ENCODE measurements at regions of chr16 and their contacts with region 1.

Region 1: DNA sequence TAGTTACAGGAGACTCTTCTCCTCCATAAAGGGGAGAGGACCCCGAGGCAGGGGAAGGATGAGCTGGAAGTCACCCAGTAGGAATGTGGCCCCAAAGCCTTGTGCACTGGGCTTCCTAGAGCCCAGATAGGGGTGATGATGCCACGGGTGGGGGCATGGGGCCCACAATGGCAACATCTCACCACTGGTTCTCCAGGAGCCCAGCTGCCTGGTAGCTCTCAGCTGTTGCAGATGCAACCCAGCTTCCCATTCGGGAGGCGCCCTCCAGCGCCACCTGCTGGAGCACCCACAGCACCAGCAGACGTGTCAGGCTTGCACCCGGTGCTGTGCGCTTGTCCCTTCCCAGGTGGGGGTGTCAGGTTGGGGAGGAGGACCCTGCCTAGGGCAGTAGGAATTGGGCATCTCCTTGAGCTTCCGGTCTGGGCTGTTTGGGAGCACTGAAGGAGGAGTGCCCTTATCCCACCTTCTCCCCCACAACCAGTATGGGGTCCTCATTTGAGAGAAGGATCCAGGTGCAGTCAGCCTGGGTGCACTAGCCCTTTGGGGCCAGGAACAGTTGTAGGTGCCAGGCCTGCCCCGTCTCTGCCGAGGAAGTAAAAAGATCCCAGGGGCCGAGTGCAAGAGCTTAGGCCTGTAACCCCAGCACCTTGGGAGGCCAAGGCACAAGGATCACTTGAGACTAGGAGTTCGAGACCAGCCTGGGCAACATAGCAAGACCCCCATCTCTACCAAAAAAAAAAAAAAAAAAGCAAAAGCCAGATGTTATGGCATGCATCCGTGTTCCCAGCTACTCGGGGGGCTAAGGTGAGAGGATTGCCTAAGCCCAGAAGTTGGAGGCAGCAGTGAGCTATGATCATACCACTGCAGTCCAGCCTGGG is 14.4 kb downstream of the CDIPT start:
- DNase-seq: peak; percentile 88
- H3K4me3 Mint-ChIP-seq: no peak overlapping the region
- H3K27ac Mint-ChIP-seq: no peak overlapping the region
- H3K4me1 Mint-ChIP-seq: peaks cover 6% of the 10 kb centered on the region
- H3K27me3 Mint-ChIP-seq: no peaks in the 10 kb centered on the region

Region 2: DNA sequence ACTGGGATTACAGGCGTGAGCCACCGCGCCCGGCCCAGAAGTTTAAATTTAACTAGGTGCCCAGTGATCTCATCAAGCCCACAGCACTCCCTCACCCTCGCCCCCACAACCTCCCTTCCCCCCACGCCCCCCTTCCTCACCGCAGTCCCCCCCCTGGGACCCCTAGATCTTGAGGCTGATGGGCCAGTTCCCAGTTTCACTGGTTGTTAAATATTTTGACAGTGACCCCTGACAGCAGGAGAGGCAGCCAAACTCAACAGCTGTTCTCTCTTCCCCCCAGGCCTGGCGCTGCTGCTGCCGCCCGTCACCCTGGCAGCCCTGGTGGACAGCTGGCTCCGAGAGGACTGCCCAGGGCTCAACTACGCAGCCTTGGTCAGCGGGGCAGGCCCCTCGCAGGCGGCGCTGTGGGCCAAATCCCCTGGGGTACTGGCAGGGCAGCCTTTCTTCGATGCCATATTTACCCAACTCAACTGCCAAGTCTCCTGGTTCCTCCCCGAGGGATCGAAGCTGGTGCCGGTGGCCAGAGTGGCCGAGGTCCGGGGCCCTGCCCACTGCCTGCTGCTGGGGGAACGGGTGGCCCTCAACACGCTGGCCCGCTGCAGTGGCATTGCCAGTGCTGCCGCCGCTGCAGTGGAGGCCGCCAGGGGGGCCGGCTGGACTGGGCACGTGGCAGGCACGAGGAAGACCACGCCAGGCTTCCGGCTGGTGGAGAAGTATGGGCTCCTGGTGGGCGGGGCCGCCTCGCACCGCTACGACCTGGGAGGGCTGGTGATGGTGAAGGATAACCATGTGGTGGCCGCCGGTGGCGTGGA is 154.1 kb before region 1 on chr16:
- CTCF ChIA-PET with region 1: interaction called, 97 read pairs
- POLR2A ChIA-PET with region 1: no interaction called
- intact Hi-C with region 1: no loop called
- DNase-seq: no peak
- H3K4me3 Mint-ChIP-seq: no peak overlapping the region
- H3K27ac Mint-ChIP-seq: no peak overlapping the region
- H3K4me1 Mint-ChIP-seq: peaks cover 4% of the 10 kb centered on the region
- H3K27me3 Mint-ChIP-seq: no peaks in the 10 kb centered on the region

Region 3: DNA sequence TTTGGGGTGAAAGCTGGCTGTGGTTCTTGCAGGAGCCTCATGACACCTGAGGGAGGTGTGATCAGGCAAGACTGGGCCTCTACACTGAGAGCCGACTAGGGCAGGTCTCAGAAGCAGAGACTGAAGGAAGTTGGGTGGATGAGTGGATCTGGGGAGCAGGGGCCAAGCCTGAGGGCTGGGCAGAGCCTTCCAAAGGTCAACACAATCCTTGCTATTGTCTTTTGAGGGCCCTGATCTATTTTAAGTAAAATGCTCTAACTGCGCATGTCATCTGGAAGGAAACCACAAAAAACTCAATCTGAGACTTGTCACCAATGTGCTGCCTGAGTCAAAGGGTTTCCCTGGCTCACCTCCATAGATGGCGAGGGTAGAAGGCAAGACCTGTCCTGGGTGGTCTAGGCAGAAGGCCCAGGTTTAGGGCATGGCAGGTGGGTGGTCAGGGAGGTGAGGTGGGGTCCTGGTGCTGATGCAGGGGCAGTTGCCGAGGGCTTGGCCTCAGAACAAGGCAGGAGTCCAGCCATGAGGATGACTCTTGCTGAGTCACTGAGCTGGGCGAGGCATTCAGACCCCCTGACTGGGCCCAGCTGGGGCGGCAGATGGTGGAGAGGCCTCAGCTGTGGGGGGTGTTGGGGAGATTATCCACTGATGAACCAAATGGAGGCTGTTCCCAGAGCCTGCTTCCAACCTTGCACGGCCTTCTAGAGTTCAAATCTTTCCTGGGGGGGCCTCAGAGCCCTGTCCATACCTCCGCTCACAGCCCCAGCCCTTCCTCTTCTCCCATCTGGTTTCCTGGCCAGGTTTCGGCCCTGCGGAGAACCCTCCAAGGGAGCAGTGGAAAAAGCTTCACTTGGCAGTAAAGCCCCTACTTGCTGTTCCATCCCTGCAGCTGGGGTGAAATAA is 23.3 kb before region 1 on chr16:
- CTCF ChIA-PET with region 1: interaction called, 44 read pairs
- POLR2A ChIA-PET with region 1: interaction called, 11 read pairs
- intact Hi-C with region 1: loop called (anchors 2 kb)
- DNase-seq: peak; percentile 72
- H3K4me3 Mint-ChIP-seq: peak overlapping the region; percentile 59
- H3K27ac Mint-ChIP-seq: peak overlapping the region; percentile 95
- H3K4me1 Mint-ChIP-seq: peaks cover 64% of the 10 kb centered on the region
- H3K27me3 Mint-ChIP-seq: no peaks in the 10 kb centered on the region

Region 4: DNA sequence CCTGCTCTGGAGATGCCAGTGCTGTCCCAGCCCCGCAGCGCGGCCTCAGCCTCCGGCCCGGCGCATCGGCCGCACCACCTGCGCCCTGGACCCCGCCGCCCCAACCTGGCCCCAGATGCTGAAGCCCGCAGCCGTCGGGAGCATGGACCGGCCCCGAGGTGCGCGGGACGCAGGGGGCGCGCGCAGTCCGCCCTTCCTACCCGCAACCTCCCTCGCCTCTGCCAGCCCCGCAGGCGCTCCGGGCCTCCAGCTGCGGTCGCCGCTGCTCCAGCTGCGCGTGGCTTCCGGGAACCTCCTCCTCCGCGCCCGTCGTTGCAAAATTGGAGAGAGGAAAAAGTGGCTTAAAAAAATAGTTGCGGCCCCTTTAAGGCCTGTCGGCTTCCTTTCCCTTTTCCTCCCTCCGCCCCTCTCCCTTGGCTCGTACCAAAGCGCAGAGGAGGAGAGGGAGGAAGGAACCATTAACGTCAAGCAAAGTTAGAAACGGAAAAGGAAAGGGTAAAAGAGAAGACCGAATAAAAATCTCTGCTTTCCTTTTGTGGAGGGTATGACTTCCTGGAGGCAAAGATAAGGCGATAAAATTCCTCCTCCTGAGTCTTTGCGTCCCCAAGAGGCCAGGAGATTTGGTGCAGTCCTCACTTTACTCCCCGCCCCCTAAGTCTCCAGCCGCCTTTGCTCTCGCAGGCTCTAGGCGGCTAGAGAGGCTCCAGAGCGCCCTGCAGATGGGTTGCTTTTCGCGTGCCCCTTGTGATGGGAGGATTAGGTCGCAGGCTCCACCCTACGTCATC is 14.4 kb after region 1 on chr16 and contains the start of gene CDIPT:
- CTCF ChIA-PET with region 1: interaction called, 11 read pairs
- POLR2A ChIA-PET with region 1: interaction called, 5 read pairs
- intact Hi-C with region 1: no loop called
- DNase-seq: peak; percentile 95
- H3K4me3 Mint-ChIP-seq: peak within 1 kb of the TSS; percentile 94
- H3K27ac Mint-ChIP-seq: peak within 1 kb of the TSS; percentile 92
- H3K4me1 Mint-ChIP-seq: peaks cover 18% of the 10 kb centered on the region
- H3K27me3 Mint-ChIP-seq: no peaks in the 10 kb centered on the region
- total RNA-seq, gene CDIPT: 39.5 to 43.9 TPM

Region 5: DNA sequence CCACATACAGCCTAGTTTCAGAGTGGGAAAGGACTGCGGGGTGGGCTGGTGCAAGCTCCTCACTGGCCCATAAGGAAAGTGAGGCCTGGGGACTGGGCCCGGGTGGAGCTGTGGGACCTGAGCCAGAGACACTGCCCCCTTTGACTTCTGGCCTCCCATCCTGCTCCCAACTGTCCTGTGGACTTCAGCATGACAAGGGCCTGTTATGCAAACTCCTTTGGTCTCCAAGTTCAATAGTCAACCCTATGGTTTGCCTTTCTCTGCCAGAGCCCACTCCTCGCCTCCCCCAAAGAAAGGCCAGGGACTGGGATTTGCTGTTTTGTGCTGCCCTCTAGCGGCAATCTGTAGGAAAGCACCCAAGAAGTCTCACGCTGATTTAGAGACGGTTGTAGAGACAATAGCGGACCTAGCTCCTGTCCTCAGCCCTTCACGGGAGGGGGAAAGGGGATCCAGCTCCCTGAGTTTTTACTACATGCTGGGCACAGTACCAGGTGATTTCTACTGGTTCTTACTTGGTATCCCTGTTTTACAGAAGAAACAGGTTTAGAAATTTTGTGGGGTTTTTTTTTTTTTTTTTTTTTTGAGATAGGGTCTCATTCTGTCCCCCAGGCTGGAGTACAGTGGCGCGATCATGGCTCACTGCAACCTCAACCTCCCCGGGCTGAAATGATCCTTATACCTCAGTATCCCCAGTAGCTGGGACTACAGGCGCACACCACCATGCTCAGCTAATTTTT is 183.6 kb after region 1 on chr16:
- CTCF ChIA-PET with region 1: interaction called, 12 read pairs
- POLR2A ChIA-PET with region 1: no interaction called
- intact Hi-C with region 1: no loop called
- DNase-seq: peak; percentile 77
- H3K4me3 Mint-ChIP-seq: no peak overlapping the region
- H3K27ac Mint-ChIP-seq: no peak overlapping the region
- H3K4me1 Mint-ChIP-seq: peaks cover 23% of the 10 kb centered on the region
- H3K27me3 Mint-ChIP-seq: peaks cover 49% of the 10 kb centered on the region

Measured in activated CD4-positive, alpha-beta memory T cell treated with anti-CD3 and anti-CD28 coated beads for 36 hours (primary cell).